ENCODE measurements at regions of chr17 and their contacts with region 1.

Region 1: DNA sequence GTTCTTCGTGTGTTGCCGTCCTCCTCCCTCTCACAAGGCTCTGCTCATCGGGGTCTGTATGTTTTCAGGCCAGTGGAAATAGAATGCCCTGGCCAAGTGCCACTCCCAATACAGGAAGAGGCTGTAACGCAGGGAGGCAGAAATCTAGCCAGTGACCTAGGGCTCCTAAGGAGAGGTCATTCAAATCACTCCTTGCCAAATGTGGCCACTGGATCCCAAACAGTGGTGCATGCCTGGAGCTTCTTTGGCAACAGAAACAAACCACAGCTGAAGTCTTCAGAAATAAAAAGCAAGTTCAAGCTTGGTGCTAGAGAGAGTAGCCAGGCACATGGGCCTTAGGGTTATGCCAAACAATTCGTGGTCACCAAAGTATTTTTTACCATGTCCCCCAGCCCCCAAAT is 66.1 kb downstream of the SMG6 start:
- DNase-seq: peak; percentile 75 to 83
- ATAC-seq: peak; percentile 64 to 80
- H3K4me3 ChIP-seq: peak overlapping the region in 1 of 4 donors; percentile 48
- H3K27ac ChIP-seq: peak overlapping the region; percentile 94 to 97 (median 95)
- H3K4me1 ChIP-seq: peaks cover 64 to 76% of the 10 kb centered on the region in 2 donors
- H3K27me3 ChIP-seq: no peaks in the 10 kb centered on the region
- CTCF ChIP-seq: no peak
- POLR2A ChIP-seq: no peak

Region 2: GRCh38 chr17:2222901-2223616 is 14.5 kb before region 1 on chr17:
- in situ Hi-C with region 1: no loop called
- intact Hi-C with region 1: loop called (anchors 2 kb)
- DNase-seq: peak; percentile 75 to 87
- ATAC-seq: peak; percentile 91 to 96
- H3K4me3 ChIP-seq: no peak overlapping the region
- H3K27ac ChIP-seq: peak overlapping the region; percentile 73 to 81 (median 78)
- H3K4me1 ChIP-seq: peaks cover 28 to 47% of the 10 kb centered on the region in 2 donors
- H3K27me3 ChIP-seq: no peaks in the 10 kb centered on the region
- CTCF ChIP-seq: peak in 1 of 5 experiments; percentile 10
- POLR2A ChIP-seq: no peak

Region 3: GRCh38 chr17:2266045-2266864 is 28.7 kb after region 1 on chr17:
- in situ Hi-C with region 1: no loop called
- intact Hi-C with region 1: no loop called
- DNase-seq: no peak
- ATAC-seq: no peak
- H3K4me3 ChIP-seq: no peak overlapping the region
- H3K27ac ChIP-seq: no peak overlapping the region
- H3K4me1 ChIP-seq: peaks cover 10 to 22% of the 10 kb centered on the region in 2 donors
- H3K27me3 ChIP-seq: no peaks in the 10 kb centered on the region
- CTCF ChIP-seq: no peak
- POLR2A ChIP-seq: no peak